MCF 10A (cell line): ENCODE measurements at regions of chr20 and their contacts with region 1.

Region 1: DNA sequence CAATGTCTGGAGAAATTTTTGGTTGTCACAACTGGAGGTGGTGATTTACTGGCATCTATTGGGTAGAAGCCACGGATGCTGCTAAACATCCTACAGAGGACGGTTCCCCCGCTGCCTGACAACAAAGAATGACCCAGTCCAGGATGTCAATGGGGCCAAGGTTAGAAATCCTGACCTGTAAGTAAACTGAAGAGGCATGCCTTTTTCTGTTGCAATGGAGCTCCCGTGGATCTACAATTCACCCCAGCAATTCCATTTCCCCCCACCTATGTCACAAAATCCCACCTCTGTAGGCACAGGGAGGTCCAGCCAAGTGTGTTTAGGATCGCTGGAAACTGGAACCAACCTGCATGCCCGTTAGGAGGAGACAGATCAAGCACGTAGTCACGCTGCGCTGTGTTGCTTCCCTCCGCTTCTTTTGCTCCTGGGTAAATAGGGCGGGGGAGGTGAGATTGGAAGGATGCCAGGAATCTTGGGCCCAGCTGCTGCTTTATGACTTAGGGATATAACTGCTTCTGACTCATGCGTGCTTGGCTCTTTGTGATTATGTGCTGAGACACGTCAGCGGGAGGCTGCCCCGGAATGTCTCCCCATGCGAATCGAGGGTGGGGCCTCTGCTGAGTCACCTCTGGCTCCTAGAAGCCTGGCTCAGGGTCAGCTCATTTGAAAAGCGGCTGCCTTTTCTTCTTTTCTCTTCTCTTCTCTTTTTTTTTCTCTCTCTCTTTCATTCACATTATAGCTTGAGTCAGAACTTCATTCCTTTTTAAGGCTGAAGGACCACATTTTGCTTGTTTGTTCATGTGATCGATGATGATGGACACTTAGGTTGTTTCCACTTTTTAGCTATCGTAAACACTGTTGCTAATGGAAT is 12.4 kb upstream of the PEDS1 start:
- DNase-seq: peak; percentile 100
- H3K4me3 Mint-ChIP-seq: peak overlapping the region; percentile 72
- H3K27ac Mint-ChIP-seq: peak overlapping the region; percentile 98
- H3K4me1 Mint-ChIP-seq: peaks cover 18% of the 10 kb centered on the region
- H3K27me3 Mint-ChIP-seq: no peaks in the 10 kb centered on the region
- CTCF ChIP-seq: no peak

Region 2: GRCh38 chr20:49982346-49983122 is 183.4 kb before region 1 on chr20 and contains the start of gene SNAI1:
- CTCF ChIA-PET with region 1: interaction called, 24 read pairs
- POLR2A ChIA-PET with region 1: interaction called, 4 read pairs
- intact Hi-C with region 1: loop called (anchors 5 kb)
- DNase-seq: peak; percentile 86
- H3K4me3 Mint-ChIP-seq: peak within 1 kb of the TSS; percentile 55
- H3K27ac Mint-ChIP-seq: peak within 1 kb of the TSS; percentile 75
- H3K4me1 Mint-ChIP-seq: peaks cover 6% of the 10 kb centered on the region
- H3K27me3 Mint-ChIP-seq: peaks cover 19% of the 10 kb centered on the region
- CTCF ChIP-seq: peak; percentile 65
- total RNA-seq, gene SNAI1: 0.17 and 0.23 TPM in 2 replicates

Region 3: GRCh38 chr20:50054626-50055511 is 111.0 kb before region 1 on chr20:
- CTCF ChIA-PET with region 1: no interaction called
- POLR2A ChIA-PET with region 1: no interaction called
- intact Hi-C with region 1: no loop called
- DNase-seq: no peak
- H3K4me3 Mint-ChIP-seq: no peak overlapping the region
- H3K27ac Mint-ChIP-seq: no peak overlapping the region
- H3K4me1 Mint-ChIP-seq: no peaks in the 10 kb centered on the region
- H3K27me3 Mint-ChIP-seq: no peaks in the 10 kb centered on the region
- CTCF ChIP-seq: no peak

Region 4: GRCh38 chr20:50101281-50101680 is 64.6 kb before region 1 on chr20:
- CTCF ChIA-PET with region 1: interaction called, 696 read pairs
- POLR2A ChIA-PET with region 1: interaction called, 10 read pairs
- intact Hi-C with region 1: no loop called
- DNase-seq: no peak
- H3K4me3 Mint-ChIP-seq: no peak overlapping the region
- H3K27ac Mint-ChIP-seq: no peak overlapping the region
- H3K4me1 Mint-ChIP-seq: peaks cover 31% of the 10 kb centered on the region
- H3K27me3 Mint-ChIP-seq: no peaks in the 10 kb centered on the region
- CTCF ChIP-seq: no peak

Region 5: GRCh38 chr20:50120897-50121693 is 44.8 kb before region 1 on chr20:
- CTCF ChIA-PET with region 1: interaction called, 696 read pairs
- POLR2A ChIA-PET with region 1: interaction called, 175 read pairs
- intact Hi-C with region 1: loop called (anchors 1 kb)
- DNase-seq: peak; percentile 75
- H3K4me3 Mint-ChIP-seq: no peak overlapping the region
- H3K27ac Mint-ChIP-seq: no peak overlapping the region
- H3K4me1 Mint-ChIP-seq: peaks cover 8% of the 10 kb centered on the region
- H3K27me3 Mint-ChIP-seq: no peaks in the 10 kb centered on the region
- CTCF ChIP-seq: peak; percentile 89

Region 6: GRCh38 chr20:50138479-50139393 is 27.2 kb before region 1 on chr20:
- CTCF ChIA-PET with region 1: interaction called, 16 read pairs
- POLR2A ChIA-PET with region 1: interaction called, 375 read pairs
- intact Hi-C with region 1: no loop called
- DNase-seq: peak; percentile 38
- H3K4me3 Mint-ChIP-seq: peak overlapping the region; percentile 35
- H3K27ac Mint-ChIP-seq: peak overlapping the region; percentile 93
- H3K4me1 Mint-ChIP-seq: peaks cover 46% of the 10 kb centered on the region
- H3K27me3 Mint-ChIP-seq: no peaks in the 10 kb centered on the region
- CTCF ChIP-seq: no peak

Region 7: DNA sequence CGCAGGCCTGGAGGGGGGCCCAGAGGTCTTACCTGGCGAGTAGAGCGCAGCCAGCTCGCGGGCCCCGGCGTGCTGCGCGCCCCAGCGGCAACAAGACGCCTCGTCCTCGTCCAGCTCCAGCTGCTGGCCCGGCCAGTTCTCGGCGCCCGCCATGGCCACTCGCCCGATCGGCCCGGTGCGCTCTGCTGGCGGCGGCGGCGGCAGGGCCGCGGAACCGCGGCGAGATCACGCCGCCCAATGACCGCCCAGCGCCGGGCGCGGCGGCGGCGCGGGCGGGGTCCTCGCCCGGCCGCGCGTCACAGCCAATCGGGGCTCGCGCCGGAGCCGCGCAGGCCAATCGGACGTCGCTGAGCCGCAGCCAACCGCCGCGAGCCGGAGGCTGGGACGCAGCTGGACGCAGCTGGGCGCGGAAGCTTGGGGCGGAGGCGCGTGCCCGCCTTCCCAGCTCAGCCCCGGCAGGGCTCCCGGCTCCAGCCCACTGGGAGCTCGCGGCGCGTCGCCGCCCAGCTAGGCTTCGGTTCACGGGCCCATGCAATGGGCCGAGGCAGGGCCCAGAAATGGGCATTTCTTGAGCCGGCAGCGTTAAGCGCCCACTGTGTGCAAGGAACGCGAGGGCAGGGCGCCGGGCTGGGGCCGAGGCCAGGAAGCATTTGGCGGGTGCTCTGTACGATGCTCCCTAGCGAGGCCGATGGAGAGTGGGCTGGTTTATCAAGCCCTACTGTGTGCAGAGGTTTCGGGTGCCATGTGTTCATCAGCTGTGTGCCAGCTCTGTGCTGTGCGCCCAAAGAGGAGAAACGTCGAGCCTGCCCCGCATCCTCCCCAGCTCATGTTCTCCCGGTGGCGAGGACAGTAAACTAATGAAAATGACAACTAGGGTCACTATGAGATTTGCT is 12.2 kb before region 1 on chr20 and contains the start of gene PEDS1:
- CTCF ChIA-PET with region 1: interaction called, 85 read pairs
- POLR2A ChIA-PET with region 1: interaction called, 375 read pairs
- intact Hi-C with region 1: loop called (anchors 1 kb)
- DNase-seq: peak; percentile 85
- H3K4me3 Mint-ChIP-seq: peak within 1 kb of the TSS; percentile 87
- H3K27ac Mint-ChIP-seq: peak within 1 kb of the TSS; percentile 94
- H3K4me1 Mint-ChIP-seq: peaks cover 44% of the 10 kb centered on the region
- H3K27me3 Mint-ChIP-seq: no peaks in the 10 kb centered on the region
- CTCF ChIP-seq: no peak
- total RNA-seq, gene PEDS1: 26.0 and 30.5 TPM in 2 replicates

Region 8: DNA sequence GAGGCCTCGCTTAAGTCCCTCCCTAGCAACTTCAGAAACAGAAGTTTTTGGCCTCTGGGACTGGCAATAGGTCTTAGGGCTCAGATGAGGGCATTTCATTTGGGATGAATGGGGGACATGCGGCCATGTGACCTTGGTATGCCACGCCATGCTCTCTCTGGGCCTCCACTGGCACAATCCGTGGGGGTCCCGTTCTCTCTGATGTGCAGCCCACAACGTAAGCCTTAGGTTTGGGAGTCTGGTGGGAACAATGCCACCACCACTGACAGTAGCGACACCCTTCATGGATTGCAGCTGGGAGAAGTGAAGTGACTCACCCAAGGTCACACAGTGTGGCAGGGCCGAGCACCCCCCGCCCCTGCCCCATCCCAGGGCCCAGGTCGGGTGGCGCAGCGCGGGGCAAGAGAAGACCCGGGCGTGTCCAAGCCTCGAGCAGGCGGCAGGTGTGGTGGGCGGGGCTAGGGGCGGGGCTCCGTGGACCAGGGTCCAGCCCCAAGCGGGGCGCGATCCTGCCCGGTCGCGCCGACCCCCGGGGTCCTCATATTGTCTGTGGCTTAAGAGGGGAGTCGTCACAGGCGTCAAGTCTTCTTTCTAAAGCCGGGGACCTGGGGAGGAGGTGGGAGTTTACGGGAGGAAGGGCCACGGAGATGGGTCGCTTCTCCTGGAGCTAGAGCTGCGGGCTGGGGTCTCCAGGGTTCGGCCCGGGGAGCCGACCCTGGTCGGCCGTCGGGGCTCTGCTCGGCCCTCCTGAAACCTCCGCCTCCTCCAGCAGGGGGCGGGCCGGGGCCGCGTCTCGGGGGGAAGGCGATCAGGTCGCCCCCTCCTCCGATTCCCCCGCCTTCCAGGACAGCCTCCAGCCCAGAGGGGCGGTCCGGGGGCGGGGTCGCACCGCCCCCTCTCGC is 24.0 kb after region 1 on chr20:
- CTCF ChIA-PET with region 1: interaction called, 7 read pairs
- POLR2A ChIA-PET with region 1: interaction called, 11 read pairs
- intact Hi-C with region 1: no loop called
- DNase-seq: peak; percentile 85
- H3K4me3 Mint-ChIP-seq: peak overlapping the region; percentile 90
- H3K27ac Mint-ChIP-seq: no peak overlapping the region
- H3K4me1 Mint-ChIP-seq: peaks cover 35% of the 10 kb centered on the region
- H3K27me3 Mint-ChIP-seq: no peaks in the 10 kb centered on the region
- CTCF ChIP-seq: peak; percentile 69

Region 9: DNA sequence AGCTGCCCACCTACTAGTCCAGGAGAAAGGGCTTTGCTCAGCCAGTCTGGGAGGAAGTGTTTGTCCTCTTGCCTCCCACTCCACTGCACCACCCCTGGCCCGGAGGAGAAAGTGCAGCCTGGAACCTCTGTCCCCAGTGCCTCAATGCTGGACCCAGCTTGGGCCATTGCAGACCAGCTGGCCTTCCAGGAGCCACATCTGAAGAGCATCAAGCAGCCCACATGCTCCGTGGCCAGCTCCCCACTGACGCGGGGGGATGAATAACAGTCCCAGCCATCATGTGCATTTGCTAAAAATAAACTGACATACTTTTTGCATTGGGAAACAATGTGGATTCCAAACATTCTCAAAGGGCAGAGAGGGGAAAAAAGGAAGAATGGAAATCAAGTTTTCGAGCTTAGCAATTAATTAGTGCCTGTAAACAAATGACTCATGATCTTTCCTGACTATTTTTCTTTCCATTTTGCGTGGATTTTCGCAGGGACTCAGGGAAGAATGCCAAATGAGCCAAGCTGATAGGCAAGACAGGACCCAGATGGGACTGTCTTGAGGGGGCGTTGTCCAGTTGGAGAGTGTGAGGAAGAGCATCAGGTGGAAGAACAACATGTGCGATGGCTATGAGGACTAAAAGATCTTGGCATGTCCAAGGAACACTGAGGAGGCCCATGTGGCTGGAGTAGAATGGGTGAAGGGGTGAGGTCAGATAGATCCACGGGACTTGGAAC is 58.8 kb after region 1 on chr20:
- CTCF ChIA-PET with region 1: no interaction called
- POLR2A ChIA-PET with region 1: no interaction called
- intact Hi-C with region 1: no loop called
- DNase-seq: peak; percentile 33
- H3K4me3 Mint-ChIP-seq: no peak overlapping the region
- H3K27ac Mint-ChIP-seq: peak overlapping the region; percentile 24
- H3K4me1 Mint-ChIP-seq: peaks cover 34% of the 10 kb centered on the region
- H3K27me3 Mint-ChIP-seq: no peaks in the 10 kb centered on the region
- CTCF ChIP-seq: no peak